Caco-2 (cell line): ENCODE measurements at regions of chr3 and their contacts with region 1.

Region 1: GRCh38 chr3:112327371-112327951 is 5.5 kb upstream of the CD200 start:
- DNase-seq: peak in 1 of 2 experiments; percentile 66
- H3K4me3 ChIP-seq: no peak overlapping the region
- H3K4me3 Mint-ChIP-seq: no peak overlapping the region
- H3K27ac Mint-ChIP-seq: no peak overlapping the region
- H3K4me1 ChIP-seq: peaks cover 8% of the 10 kb centered on the region
- H3K4me1 Mint-ChIP-seq: peaks cover 12% of the 10 kb centered on the region
- H3K27me3 ChIP-seq: no peaks in the 10 kb centered on the region
- H3K27me3 Mint-ChIP-seq: no peaks in the 10 kb centered on the region
- CTCF ChIP-seq: peak; percentile 47 to 60

Region 2: GRCh38 chr3:112273536-112273935 is 53.9 kb before region 1 on chr3:
- CTCF ChIA-PET with region 1: no interaction called
- POLR2A ChIA-PET with region 1: no interaction called
- intact Hi-C with region 1: no loop called
- DNase-seq: no peak
- H3K4me3 ChIP-seq: no peak overlapping the region
- H3K4me3 Mint-ChIP-seq: no peak overlapping the region
- H3K27ac Mint-ChIP-seq: no peak overlapping the region
- H3K4me1 ChIP-seq: no peaks in the 10 kb centered on the region
- H3K4me1 Mint-ChIP-seq: no peaks in the 10 kb centered on the region
- H3K27me3 ChIP-seq: no peaks in the 10 kb centered on the region
- H3K27me3 Mint-ChIP-seq: no peaks in the 10 kb centered on the region
- CTCF ChIP-seq: no peak

Region 3: GRCh38 chr3:112437146-112438022 is 109.9 kb after region 1 on chr3:
- CTCF ChIA-PET with region 1: interaction called, 6 read pairs
- POLR2A ChIA-PET with region 1: no interaction called
- intact Hi-C with region 1: loop called (anchors 1 kb)
- DNase-seq: peak in 1 of 2 experiments; percentile 18
- H3K4me3 ChIP-seq: no peak overlapping the region
- H3K4me3 Mint-ChIP-seq: no peak overlapping the region
- H3K27ac Mint-ChIP-seq: no peak overlapping the region
- H3K4me1 ChIP-seq: no peaks in the 10 kb centered on the region
- H3K4me1 Mint-ChIP-seq: no peaks in the 10 kb centered on the region
- H3K27me3 ChIP-seq: no peaks in the 10 kb centered on the region
- H3K27me3 Mint-ChIP-seq: peaks cover 6% of the 10 kb centered on the region
- CTCF ChIP-seq: peak; percentile 9 to 35

Region 4: GRCh38 chr3:112519424-112520001 is 192.1 kb after region 1 on chr3:
- CTCF ChIA-PET with region 1: interaction called, 3 read pairs
- POLR2A ChIA-PET with region 1: no interaction called
- intact Hi-C with region 1: loop called (anchors 1 kb)
- DNase-seq: peak; percentile 35 to 47
- H3K4me3 ChIP-seq: no peak overlapping the region
- H3K4me3 Mint-ChIP-seq: no peak overlapping the region
- H3K27ac Mint-ChIP-seq: no peak overlapping the region
- H3K4me1 ChIP-seq: no peaks in the 10 kb centered on the region
- H3K4me1 Mint-ChIP-seq: no peaks in the 10 kb centered on the region
- H3K27me3 ChIP-seq: no peaks in the 10 kb centered on the region
- H3K27me3 Mint-ChIP-seq: no peaks in the 10 kb centered on the region
- CTCF ChIP-seq: peak; percentile 67 to 74